Dorsolateral prefrontal cortex (tissue), 120 donors: ENCODE measurements at regions of chr12 and their contacts with region 1.

Region 1: GRCh38 chr12:50533203-50533584 is 28.4 kb downstream of the DIP2B start:
- DNase-seq: no peak
- H3K4me3 ChIP-seq: no peak overlapping the region
- H3K27ac ChIP-seq: peak overlapping the region in 24 of 59 donors; percentile 3 to 88 (median 37)
- H3K27me3 ChIP-seq: no peaks in the 10 kb centered on the region
- CTCF ChIP-seq: no peak

Region 2: GRCh38 chr12:50488801-50489200 is 44.4 kb before region 1 on chr12:
- intact Hi-C with region 1: no loop called
- DNase-seq: no peak
- H3K4me3 ChIP-seq: no peak overlapping the region
- H3K27ac ChIP-seq: no peak overlapping the region
- H3K27me3 ChIP-seq: no peaks in the 10 kb centered on the region
- CTCF ChIP-seq: no peak

Region 3: DNA sequence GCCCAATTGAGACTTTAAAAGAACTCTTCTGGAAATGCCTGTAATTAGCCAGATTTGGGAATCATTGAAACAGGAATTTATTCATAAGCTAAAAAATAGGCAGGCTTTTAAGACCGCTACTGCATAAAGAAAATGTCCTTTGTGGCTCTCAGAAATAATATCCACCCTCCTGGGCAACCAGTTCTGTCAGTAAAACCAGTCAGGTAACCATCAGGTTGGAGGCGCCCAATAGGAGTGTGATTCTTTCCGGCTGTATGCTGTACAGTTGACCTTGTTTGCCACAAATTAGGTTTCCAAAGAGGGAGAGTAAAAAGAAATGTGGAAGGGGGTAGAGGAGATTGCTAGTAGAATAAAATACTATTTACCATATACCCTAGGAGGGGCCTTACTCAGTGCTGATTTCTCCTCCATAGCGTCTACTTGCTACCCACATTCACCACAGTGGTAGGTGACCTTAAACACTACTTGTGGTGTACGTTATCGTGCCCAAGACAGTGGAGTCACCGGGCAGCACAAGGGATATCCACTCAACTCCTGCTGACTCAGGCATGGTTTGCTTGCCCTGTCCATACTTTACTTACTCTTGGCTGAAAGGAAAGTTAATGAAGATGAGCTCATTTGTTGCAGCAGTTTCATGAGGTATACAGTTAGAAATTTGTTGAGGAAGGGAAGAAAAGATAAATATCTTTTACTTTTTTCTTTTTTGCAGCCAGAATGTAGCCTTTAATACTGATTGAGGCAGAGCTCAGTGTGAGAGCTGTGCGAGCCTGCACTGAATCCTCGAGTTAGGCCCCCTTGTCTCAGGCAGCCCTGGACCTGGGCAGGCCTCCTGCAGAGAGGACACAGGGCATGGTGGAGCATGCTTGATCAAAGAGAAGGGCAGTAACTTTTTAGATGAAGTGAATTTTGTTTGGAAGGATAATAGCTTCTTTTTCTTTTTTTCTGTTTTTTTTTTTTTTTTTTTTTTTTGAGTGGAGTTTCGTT is 48.3 kb after region 1 on chr12:
- intact Hi-C with region 1: loop called in 1 of 2 experiments (anchors 5 kb)
- DNase-seq: no peak
- H3K4me3 ChIP-seq: no peak overlapping the region
- H3K27ac ChIP-seq: peak overlapping the region in 42 of 59 donors; percentile 1 to 74 (median 42)
- H3K27me3 ChIP-seq: no peaks in the 10 kb centered on the region
- CTCF ChIP-seq: no peak